K562 (cell line): ENCODE measurements at regions of chr2 and their contacts with region 1.

Region 1: GRCh38 chr2:24360050-24360962 is at the start of gene ITSN2:
- DNase-seq: peak; percentile 76 to 81 (median 78)
- ATAC-seq: peak; percentile 93
- H3K4me3 ChIP-seq: peak within 1 kb of the TSS; percentile 94
- H3K27ac ChIP-seq: peak within 1 kb of the TSS; percentile 85
- H3K4me1 ChIP-seq: peaks cover 21 to 28% of the 10 kb centered on the region in 2 experiments
- H3K27me3 ChIP-seq: no peaks in the 10 kb centered on the region
- CTCF ChIP-seq: no peak
- EP300 ChIP-seq: no peak
- POLR2A ChIP-seq: peak; percentile 81
- RAD21 ChIP-seq: no peak
- polyA plus RNA-seq, gene ITSN2: 6.6 to 6.7 TPM

Region 2: DNA sequence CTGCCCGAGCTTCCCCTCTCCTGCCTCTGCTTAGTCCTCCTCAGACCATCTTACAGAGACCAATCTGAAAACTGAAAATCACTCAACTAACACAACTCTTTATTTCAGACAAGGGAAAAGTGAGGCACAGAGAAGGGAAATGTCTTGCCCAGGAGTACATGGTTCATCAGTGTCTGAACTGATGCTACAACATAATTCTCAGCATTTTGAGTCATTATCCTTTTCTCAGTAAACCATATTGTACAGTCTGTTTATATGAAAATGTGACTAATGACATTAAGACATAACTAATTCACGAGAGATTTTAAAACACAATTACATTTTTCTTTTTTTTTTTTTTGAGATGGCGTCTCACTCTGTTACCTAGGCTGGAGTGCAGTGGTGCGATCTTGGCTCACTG is 62.6 kb before region 1 on chr2:
- CTCF ChIA-PET with region 1: no interaction called
- POLR2A ChIA-PET with region 1: no interaction called
- in situ Hi-C with region 1: no loop called
- intact Hi-C with region 1: no loop called
- DNase-seq: no peak
- ATAC-seq: no peak
- H3K4me3 ChIP-seq: no peak overlapping the region
- H3K27ac ChIP-seq: no peak overlapping the region
- H3K4me1 ChIP-seq: no peaks in the 10 kb centered on the region
- H3K27me3 ChIP-seq: no peaks in the 10 kb centered on the region
- CTCF ChIP-seq: no peak
- EP300 ChIP-seq: no peak
- POLR2A ChIP-seq: no peak
- RAD21 ChIP-seq: no peak

Region 3: DNA sequence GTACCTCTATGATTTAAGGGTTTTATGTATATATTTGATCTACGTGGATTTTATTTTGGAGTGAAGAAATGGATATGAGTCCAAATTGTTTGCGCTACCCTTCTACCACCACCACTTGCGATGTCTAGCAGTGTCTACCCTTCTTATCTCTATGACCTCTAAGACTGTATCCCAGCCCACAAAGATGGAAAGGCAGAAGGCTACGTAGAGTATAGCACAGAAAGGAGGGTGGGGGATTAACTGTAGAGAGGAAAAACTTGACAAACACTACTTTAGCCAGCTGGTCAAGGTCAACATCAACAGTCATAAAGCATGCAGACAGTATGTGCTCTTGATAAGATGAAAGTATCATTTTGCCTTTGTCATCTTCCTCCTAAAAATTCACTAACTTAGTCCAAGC is 14.4 kb before region 1 on chr2:
- CTCF ChIA-PET with region 1: no interaction called
- POLR2A ChIA-PET with region 1: interaction called, 12 read pairs
- in situ Hi-C with region 1: no loop called
- intact Hi-C with region 1: no loop called
- DNase-seq: peak in 1 of 4 experiments; percentile 37
- ATAC-seq: peak; percentile 76
- H3K4me3 ChIP-seq: no peak overlapping the region
- H3K27ac ChIP-seq: no peak overlapping the region
- H3K4me1 ChIP-seq: peaks cover 0 to 8% of the 10 kb centered on the region in 2 experiments; a peak in 1 of 5 replicates
- H3K27me3 ChIP-seq: no peaks in the 10 kb centered on the region
- CTCF ChIP-seq: no peak
- EP300 ChIP-seq: no peak
- POLR2A ChIP-seq: no peak
- RAD21 ChIP-seq: no peak

Region 4: DNA sequence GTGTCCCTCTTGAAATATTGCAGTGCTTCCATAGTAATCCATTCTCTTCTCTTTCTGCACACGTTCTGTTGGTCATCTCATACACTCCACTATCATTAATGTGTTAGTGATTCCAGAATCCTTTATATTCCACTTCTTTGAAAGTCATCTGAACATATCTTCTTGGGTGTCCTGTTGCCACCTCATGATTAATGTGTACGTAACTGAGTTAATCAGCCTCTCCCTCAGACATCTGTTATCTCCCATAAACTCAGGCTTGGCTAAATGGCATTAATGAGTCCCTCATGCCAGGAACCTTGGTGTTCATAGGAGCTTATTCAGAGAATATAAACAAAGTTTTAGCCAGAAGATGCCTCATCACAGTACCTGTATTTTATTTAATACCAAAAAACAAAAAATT is 257.1 kb after region 1 on chr2:
- CTCF ChIA-PET with region 1: no interaction called
- POLR2A ChIA-PET with region 1: no interaction called
- in situ Hi-C with region 1: no loop called
- intact Hi-C with region 1: no loop called
- DNase-seq: no peak
- ATAC-seq: no peak
- H3K4me3 ChIP-seq: no peak overlapping the region
- H3K27ac ChIP-seq: no peak overlapping the region
- H3K4me1 ChIP-seq: peaks cover 4 to 9% of the 10 kb centered on the region in 2 experiments; a peak in 3 of 5 replicates
- H3K27me3 ChIP-seq: no peaks in the 10 kb centered on the region
- CTCF ChIP-seq: no peak
- EP300 ChIP-seq: no peak
- POLR2A ChIP-seq: no peak
- RAD21 ChIP-seq: no peak